Heart left ventricle (tissue), 16 donors: ENCODE measurements at regions of chr1 and their contacts with region 1.

Region 1: GRCh38 chr1:20521960-20522861 is 14.3 kb upstream of the MUL1 start:
- DNase-seq: peak; percentile 68 to 79 (median 70)
- ATAC-seq: peak; percentile 37 to 79 (median 75)
- H3K4me3 ChIP-seq: peak overlapping the region in 3 of 12 donors; percentile 24 to 33 (median 29)
- H3K27ac ChIP-seq: no peak overlapping the region
- H3K4me1 ChIP-seq: peaks cover 0 to 7% (median 0%) of the 10 kb centered on the region in 12 donors
- H3K27me3 ChIP-seq: no peaks in the 10 kb centered on the region
- CTCF ChIP-seq: peak; percentile 76 to 94 (median 90)
- POLR2A ChIP-seq: no peak

Region 2: GRCh38 chr1:20574686-20575540 is 52.7 kb after region 1 on chr1:
- intact Hi-C with region 1: loop called in 2 of 10 experiments (anchors 2 to 10 kb)
- DNase-seq: peak; percentile 84 to 93 (median 86)
- ATAC-seq: peak; percentile 88 to 98 (median 98)
- H3K4me3 ChIP-seq: no peak overlapping the region
- H3K27ac ChIP-seq: no peak overlapping the region
- H3K4me1 ChIP-seq: peaks cover 0 to 4% (median 0%) of the 10 kb centered on the region in 12 donors
- H3K27me3 ChIP-seq: peaks cover 0 to 3% (median 0%) of the 10 kb centered on the region in 9 donors
- CTCF ChIP-seq: peak; percentile 58 to 88 (median 73)
- POLR2A ChIP-seq: no peak

Region 3: DNA sequence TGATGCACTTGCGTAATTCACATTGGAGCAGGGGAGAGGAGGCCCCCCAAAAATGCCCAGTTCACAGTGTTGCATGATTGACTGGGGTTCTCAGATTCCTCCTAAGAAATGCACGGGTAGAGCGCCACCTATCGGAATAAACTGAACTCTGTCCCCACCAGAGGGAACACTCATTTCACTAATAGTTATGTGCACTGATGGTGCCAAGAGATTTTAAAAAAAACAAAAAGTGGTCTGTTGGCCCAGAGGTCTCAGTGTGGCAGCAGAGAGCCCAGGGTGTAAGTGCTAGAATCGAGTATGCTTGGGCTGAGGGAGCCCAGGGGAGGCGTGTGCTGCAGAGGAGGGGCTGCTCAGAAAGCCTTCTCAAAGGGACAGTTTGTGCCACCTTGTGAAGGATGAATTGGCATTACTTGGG is 118.0 kb after region 1 on chr1:
- intact Hi-C with region 1: loop called in 5 of 10 experiments (anchors 1 to 5 kb)
- DNase-seq: peak in 1 of 5 donors; percentile 36
- ATAC-seq: peak in 3 of 4 donors; percentile 53 to 61 (median 57)
- H3K4me3 ChIP-seq: no peak overlapping the region
- H3K27ac ChIP-seq: no peak overlapping the region
- H3K4me1 ChIP-seq: peaks cover 0 to 17% (median 5%) of the 10 kb centered on the region in 12 donors
- H3K27me3 ChIP-seq: no peaks in the 10 kb centered on the region
- CTCF ChIP-seq: peak; percentile 65 to 91 (median 81)
- POLR2A ChIP-seq: no peak

Region 4: GRCh38 chr1:20732588-20733360 is 210.6 kb after region 1 on chr1 and contains the start of gene SH2D5:
- intact Hi-C with region 1: loop called in 5 of 10 experiments (anchors 5 to 10 kb)
- DNase-seq: peak in 4 of 5 donors; percentile 41 to 63 (median 51)
- ATAC-seq: peak; percentile 7 to 78 (median 64)
- H3K4me3 ChIP-seq: peak within 1 kb of the TSS; percentile 42 to 69 (median 56)
- H3K27ac ChIP-seq: peak within 1 kb of the TSS in 6 of 12 donors; percentile 19 to 57 (median 38)
- H3K4me1 ChIP-seq: peaks cover 0 to 32% (median 13%) of the 10 kb centered on the region in 12 donors
- H3K27me3 ChIP-seq: peaks cover 4 to 44% (median 26%) of the 10 kb centered on the region in 9 donors
- CTCF ChIP-seq: peak in 9 of 12 donors; percentile 9 to 51 (median 31)
- POLR2A ChIP-seq: no peak
- total RNA-seq, gene SH2D5: 0.30 to 0.67 TPM in 2 of 9 donors, not detected in the others